Endothelial cell of umbilical vein (primary cell): ENCODE measurements at regions of chr9 and their contacts with region 1.

Region 1: GRCh38 chr9:95004411-95005277 is 278.1 kb downstream of the AOPEP start:
- DNase-seq: peak; percentile 19
- H3K4me3 ChIP-seq: peak overlapping the region; percentile 88 to 97 (median 95)
- H3K27ac ChIP-seq: peak overlapping the region; percentile 93
- H3K4me1 ChIP-seq: peaks cover 47% of the 10 kb centered on the region
- H3K27me3 ChIP-seq: no peaks in the 10 kb centered on the region
- CTCF ChIP-seq: no peak
- POLR2A ChIP-seq: peak; percentile 22

Region 2: DNA sequence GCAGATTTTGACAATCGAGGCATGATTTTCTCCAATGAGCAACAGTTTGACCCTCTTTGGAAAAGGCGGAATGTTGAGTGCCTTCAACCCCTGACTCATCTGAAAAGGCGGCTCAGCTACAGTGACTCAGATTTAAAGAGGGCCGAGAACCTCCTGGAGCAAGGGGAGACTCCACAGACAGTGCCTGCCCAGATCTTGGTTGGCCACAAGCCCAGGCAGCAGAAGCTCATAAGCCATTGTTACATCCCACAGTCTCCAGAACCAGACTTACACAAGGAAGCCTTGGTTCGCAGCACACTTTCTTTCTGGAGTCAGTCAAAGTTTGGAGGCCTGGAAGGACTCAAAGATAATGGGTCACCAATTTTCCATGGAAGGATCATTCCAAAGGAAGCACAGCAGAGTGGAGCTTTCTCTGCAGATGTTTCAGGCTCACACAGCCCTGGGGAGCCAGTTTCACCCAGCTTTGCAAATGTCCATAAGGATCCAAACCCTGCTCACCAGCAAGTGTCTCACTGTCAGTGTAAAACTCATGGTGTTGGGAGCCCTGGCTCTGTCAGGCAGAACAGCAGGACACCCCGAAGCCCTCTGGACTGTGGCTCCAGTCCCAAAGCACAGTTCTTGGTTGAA is 906.7 kb before region 1 on chr9:
- CTCF ChIA-PET with region 1: no interaction called
- POLR2A ChIA-PET with region 1: no interaction called
- dilution Hi-C with region 1: no loop called
- intact Hi-C with region 1: no loop called
- DNase-seq: no peak
- H3K4me3 ChIP-seq: no peak overlapping the region
- H3K27ac ChIP-seq: no peak overlapping the region
- H3K4me1 ChIP-seq: no peaks in the 10 kb centered on the region
- H3K27me3 ChIP-seq: no peaks in the 10 kb centered on the region
- CTCF ChIP-seq: no peak
- POLR2A ChIP-seq: no peak

Region 3: GRCh38 chr9:94681508-94681907 is 323.1 kb before region 1 on chr9:
- CTCF ChIA-PET with region 1: interaction called, 4 read pairs
- POLR2A ChIA-PET with region 1: no interaction called
- dilution Hi-C with region 1: no loop called
- intact Hi-C with region 1: loop called (anchors 5 kb)
- DNase-seq: peak; percentile 67
- H3K4me3 ChIP-seq: no peak overlapping the region
- H3K27ac ChIP-seq: no peak overlapping the region
- H3K4me1 ChIP-seq: no peaks in the 10 kb centered on the region
- H3K27me3 ChIP-seq: peaks cover 3 to 4% of the 10 kb centered on the region in 2 experiments
- CTCF ChIP-seq: peak; percentile 68 to 74
- POLR2A ChIP-seq: no peak

Region 4: GRCh38 chr9:94783102-94783664 is 221.5 kb before region 1 on chr9:
- CTCF ChIA-PET with region 1: interaction called, 12 read pairs
- POLR2A ChIA-PET with region 1: no interaction called
- dilution Hi-C with region 1: no loop called
- intact Hi-C with region 1: loop called (anchors 1 kb)
- DNase-seq: peak; percentile 81
- H3K4me3 ChIP-seq: no peak overlapping the region
- H3K27ac ChIP-seq: no peak overlapping the region
- H3K4me1 ChIP-seq: no peaks in the 10 kb centered on the region
- H3K27me3 ChIP-seq: no peaks in the 10 kb centered on the region
- CTCF ChIP-seq: peak; percentile 64 to 65
- POLR2A ChIP-seq: no peak

Region 5: DNA sequence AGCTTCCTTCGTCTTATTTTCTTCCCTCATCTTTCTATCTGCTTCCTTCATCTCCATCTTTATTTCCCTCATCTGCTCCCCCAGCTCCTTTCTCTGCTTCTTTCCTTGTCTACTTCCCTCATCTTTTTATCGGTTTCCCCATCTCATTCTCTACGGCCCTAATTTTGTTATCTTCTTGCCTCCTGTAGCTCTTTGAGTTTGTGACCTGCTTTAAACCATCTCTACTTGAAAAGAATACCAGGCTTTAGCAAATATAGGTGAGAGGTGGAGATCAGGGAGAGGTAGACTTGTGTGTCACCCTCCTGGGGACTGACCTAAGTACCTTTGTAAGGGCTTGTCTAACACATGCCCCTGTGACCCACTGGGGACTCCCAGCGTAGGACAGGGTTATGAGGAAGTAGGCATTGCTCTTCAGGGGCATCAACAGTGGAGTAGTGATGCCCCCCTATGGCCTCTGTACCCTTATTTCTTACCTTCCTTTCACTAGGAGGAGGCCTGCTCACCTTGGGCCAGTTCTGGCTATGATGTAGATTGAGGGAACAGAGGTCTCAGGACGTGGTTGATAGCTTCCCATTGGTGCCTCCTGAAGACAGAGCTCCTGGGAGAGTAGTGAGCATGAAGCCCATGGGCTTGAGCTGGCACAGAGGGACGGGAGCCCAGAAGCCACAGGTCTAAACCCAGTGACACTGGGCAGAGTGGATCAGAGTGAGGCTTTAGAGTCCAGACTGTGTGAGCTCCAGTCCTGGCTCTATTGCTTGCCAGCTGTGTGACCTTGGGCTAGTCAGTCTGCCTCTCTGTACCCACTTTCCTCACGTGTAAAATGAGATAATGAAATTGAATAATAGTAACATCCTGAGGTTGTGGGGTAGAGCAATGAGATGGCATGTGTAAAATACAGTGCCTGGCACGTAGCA is 86.5 kb before region 1 on chr9:
- CTCF ChIA-PET with region 1: interaction called, 4 read pairs
- POLR2A ChIA-PET with region 1: no interaction called
- dilution Hi-C with region 1: no loop called
- intact Hi-C with region 1: loop called (anchors 2 kb)
- DNase-seq: no peak
- H3K4me3 ChIP-seq: no peak overlapping the region
- H3K27ac ChIP-seq: no peak overlapping the region
- H3K4me1 ChIP-seq: peaks cover 40% of the 10 kb centered on the region
- H3K27me3 ChIP-seq: no peaks in the 10 kb centered on the region
- CTCF ChIP-seq: no peak
- POLR2A ChIP-seq: no peak

Region 6: GRCh38 chr9:94937214-94937903 is 67.3 kb before region 1 on chr9:
- CTCF ChIA-PET with region 1: no interaction called
- POLR2A ChIA-PET with region 1: no interaction called
- dilution Hi-C with region 1: no loop called
- intact Hi-C with region 1: loop called (anchors 2 kb)
- DNase-seq: peak; percentile 84
- H3K4me3 ChIP-seq: no peak overlapping the region
- H3K27ac ChIP-seq: peak overlapping the region; percentile 45
- H3K4me1 ChIP-seq: peaks cover 31% of the 10 kb centered on the region
- H3K27me3 ChIP-seq: no peaks in the 10 kb centered on the region
- CTCF ChIP-seq: no peak
- POLR2A ChIP-seq: no peak

Region 7: DNA sequence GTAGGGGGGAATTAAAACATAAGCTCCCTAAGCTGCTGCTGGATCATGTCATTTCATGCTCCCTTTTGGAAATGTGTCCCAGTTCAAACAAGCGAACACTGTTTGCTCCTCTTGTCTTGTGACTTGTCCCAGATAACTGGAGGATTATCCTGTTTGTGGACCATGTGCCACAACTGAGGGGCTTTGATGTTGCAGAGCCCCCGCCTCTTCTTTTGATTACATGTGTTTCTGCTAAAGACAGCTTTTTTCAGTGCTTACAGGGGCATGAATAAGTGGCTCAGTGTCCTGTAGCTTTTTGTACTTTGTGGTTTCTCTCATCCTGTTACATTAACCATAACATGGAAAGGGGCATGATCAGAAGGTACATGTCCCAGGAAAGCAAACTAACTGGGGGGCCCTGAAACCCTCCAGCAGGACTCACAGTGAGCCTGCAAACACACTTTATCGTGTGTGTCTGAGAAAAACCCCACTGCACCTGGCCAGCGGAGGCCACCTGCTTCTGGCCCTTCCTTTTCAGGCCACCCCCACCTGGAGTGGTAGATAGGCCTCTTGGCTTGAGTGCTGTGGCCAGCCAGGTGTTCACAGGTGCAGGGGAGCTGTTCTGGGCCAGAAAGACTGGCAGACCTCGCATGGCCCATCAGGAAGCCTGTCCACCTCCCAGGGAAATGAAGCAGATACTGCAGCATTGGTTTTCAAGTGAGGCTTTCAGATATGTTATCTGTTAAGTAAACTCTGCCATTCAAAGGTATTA is 27.2 kb after region 1 on chr9:
- CTCF ChIA-PET with region 1: no interaction called
- POLR2A ChIA-PET with region 1: no interaction called
- dilution Hi-C with region 1: no loop called
- intact Hi-C with region 1: no loop called
- DNase-seq: no peak
- H3K4me3 ChIP-seq: no peak overlapping the region
- H3K27ac ChIP-seq: no peak overlapping the region
- H3K4me1 ChIP-seq: no peaks in the 10 kb centered on the region
- H3K27me3 ChIP-seq: no peaks in the 10 kb centered on the region
- CTCF ChIP-seq: no peak
- POLR2A ChIP-seq: no peak

Region 8: GRCh38 chr9:95048225-95049087 is 43.8 kb after region 1 on chr9:
- CTCF ChIA-PET with region 1: no interaction called
- POLR2A ChIA-PET with region 1: no interaction called
- dilution Hi-C with region 1: no loop called
- intact Hi-C with region 1: loop called (anchors 2 kb)
- DNase-seq: peak; percentile 52
- H3K4me3 ChIP-seq: peak overlapping the region; percentile 9 to 44 (median 42)
- H3K27ac ChIP-seq: no peak overlapping the region
- H3K4me1 ChIP-seq: peaks cover 12% of the 10 kb centered on the region
- H3K27me3 ChIP-seq: no peaks in the 10 kb centered on the region
- CTCF ChIP-seq: no peak
- POLR2A ChIP-seq: no peak

Region 9: GRCh38 chr9:95138474-95138873 is 133.8 kb after region 1 on chr9:
- CTCF ChIA-PET with region 1: no interaction called
- POLR2A ChIA-PET with region 1: no interaction called
- dilution Hi-C with region 1: no loop called
- intact Hi-C with region 1: no loop called
- DNase-seq: peak; percentile 9
- H3K4me3 ChIP-seq: no peak overlapping the region
- H3K27ac ChIP-seq: no peak overlapping the region
- H3K4me1 ChIP-seq: no peaks in the 10 kb centered on the region
- H3K27me3 ChIP-seq: no peaks in the 10 kb centered on the region
- CTCF ChIP-seq: no peak
- POLR2A ChIP-seq: no peak

Region 10: GRCh38 chr9:95264954-95265615 is 260.4 kb after region 1 on chr9:
- CTCF ChIA-PET with region 1: no interaction called
- POLR2A ChIA-PET with region 1: no interaction called
- dilution Hi-C with region 1: no loop called
- intact Hi-C with region 1: no loop called
- DNase-seq: peak; percentile 45
- H3K4me3 ChIP-seq: no peak overlapping the region
- H3K27ac ChIP-seq: no peak overlapping the region
- H3K4me1 ChIP-seq: no peaks in the 10 kb centered on the region
- H3K27me3 ChIP-seq: no peaks in the 10 kb centered on the region
- CTCF ChIP-seq: peak in 1 of 2 donors; percentile 33
- POLR2A ChIP-seq: no peak